KBM-7 (cell line): ENCODE measurements at regions of chr1 and their contacts with region 1.

Region 1: GRCh38 chr1:180178511-180179161 is 24.0 kb downstream of the QSOX1 start:
- DNase-seq: peak; percentile 72

Region 2: GRCh38 chr1:179197690-179198297 is 980.8 kb before region 1 on chr1:
- in situ Hi-C with region 1: no loop called
- DNase-seq: no peak

Region 3: GRCh38 chr1:179867807-179868330 is 310.8 kb before region 1 on chr1:
- in situ Hi-C with region 1: loop called (anchors 10 kb)
- DNase-seq: peak; percentile 78

Region 4: GRCh38 chr1:180680558-180681144 is 502.0 kb after region 1 on chr1:
- in situ Hi-C with region 1: no loop called
- DNase-seq: no peak